PC-3 (cell line): ENCODE measurements at regions of chr2 and their contacts with region 1.

Region 1: DNA sequence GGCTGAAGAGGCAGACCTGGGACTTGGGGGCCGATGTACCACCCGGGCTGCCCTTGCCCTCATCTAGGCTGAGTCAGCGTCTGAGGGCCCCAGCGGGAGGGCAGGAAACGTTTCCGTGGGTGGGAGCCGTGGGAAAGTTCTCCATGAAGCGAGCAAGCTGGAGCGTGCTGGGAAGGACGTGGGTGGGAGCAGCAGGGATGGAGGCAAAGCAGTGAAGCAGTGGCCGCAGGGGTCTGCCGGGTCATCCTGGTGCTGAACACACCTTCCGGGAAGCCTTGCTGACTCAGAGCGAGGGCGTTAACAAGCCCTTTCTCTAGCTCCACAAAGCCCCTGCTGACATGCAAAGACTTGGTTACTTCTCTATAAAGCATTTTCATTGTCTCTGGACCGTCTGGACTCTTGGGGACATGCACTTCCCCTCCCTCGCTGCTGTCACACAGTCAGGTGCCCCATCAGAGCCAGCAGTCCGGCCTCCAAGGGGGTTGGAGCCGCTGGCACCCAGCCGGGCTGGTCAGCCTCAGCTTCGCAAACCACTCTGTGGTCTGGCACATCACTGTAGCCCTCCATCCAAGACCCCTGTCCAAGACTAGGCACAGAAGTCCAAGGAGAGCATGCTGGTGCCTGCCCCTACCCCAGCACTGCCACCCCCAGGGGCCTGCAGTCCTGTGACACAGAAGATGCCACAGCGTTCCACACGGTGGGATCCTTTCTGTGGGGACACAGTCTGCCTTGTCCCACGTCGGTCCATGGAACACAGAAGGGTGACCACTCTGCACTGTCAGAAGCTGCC is 115.1 kb upstream of the GPC1 start:
- DNase-seq: no peak
- ATAC-seq: no peak
- H3K4me3 ChIP-seq: no peak overlapping the region
- H3K27ac ChIP-seq: no peak overlapping the region
- H3K4me1 ChIP-seq: no peaks in the 10 kb centered on the region
- H3K27me3 ChIP-seq: peaks cover 70% of the 10 kb centered on the region
- CTCF ChIP-seq: no peak

Region 2: DNA sequence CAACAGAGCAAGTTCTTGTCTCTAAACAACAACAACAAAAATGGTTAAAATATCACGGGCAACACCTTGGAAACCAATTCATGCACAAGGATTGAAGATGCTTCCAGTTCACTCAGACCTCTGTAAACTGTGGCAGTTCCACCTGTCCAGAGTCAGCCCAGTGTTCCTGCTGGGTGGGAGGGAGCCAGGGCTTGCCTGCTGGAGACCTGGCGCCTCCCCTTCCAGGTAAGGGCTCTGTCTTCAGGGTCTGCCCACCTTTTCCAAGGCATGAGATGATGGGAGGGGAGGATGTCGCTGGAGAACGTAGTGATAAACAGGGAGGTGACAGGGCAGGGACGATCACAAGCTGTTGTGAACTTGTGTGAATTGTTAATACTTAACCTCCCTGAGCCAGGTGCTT is 105.3 kb after region 1 on chr2:
- CTCF ChIA-PET with region 1: interaction called, 10 read pairs
- POLR2A ChIA-PET with region 1: no interaction called
- intact Hi-C with region 1: no loop called
- DNase-seq: no peak
- ATAC-seq: no peak
- H3K4me3 ChIP-seq: no peak overlapping the region
- H3K27ac ChIP-seq: no peak overlapping the region
- H3K4me1 ChIP-seq: peaks cover 13% of the 10 kb centered on the region
- H3K27me3 ChIP-seq: no peaks in the 10 kb centered on the region
- CTCF ChIP-seq: no peak